Transverse colon (tissue), 4 donors: ENCODE measurements at regions of chr12 and their contacts with region 1.

Region 1: GRCh38 chr12:39541471-39541870 is 78.1 kb downstream of the ABCD2 start:
- DNase-seq: no peak
- H3K4me3 ChIP-seq: no peak overlapping the region
- H3K27ac ChIP-seq: no peak overlapping the region
- H3K4me1 ChIP-seq: no peaks in the 10 kb centered on the region
- H3K27me3 ChIP-seq: no peaks in the 10 kb centered on the region
- CTCF ChIP-seq: no peak
- EP300 ChIP-seq: no peak
- POLR2A ChIP-seq: no peak

Region 2: GRCh38 chr12:38601949-38602348 is 939.5 kb before region 1 on chr12:
- in situ Hi-C with region 1: no loop called
- intact Hi-C with region 1: loop called (anchors 10 kb)
- DNase-seq: no peak
- H3K4me3 ChIP-seq: no peak overlapping the region
- H3K27ac ChIP-seq: no peak overlapping the region
- H3K4me1 ChIP-seq: no peaks in the 10 kb centered on the region
- H3K27me3 ChIP-seq: no peaks in the 10 kb centered on the region
- CTCF ChIP-seq: no peak
- EP300 ChIP-seq: no peak
- POLR2A ChIP-seq: no peak

Region 3: GRCh38 chr12:39824505-39825212 is 283.2 kb after region 1 on chr12:
- in situ Hi-C with region 1: no loop called
- intact Hi-C with region 1: no loop called
- DNase-seq: no peak
- H3K4me3 ChIP-seq: no peak overlapping the region
- H3K27ac ChIP-seq: no peak overlapping the region
- H3K4me1 ChIP-seq: no peaks in the 10 kb centered on the region
- H3K27me3 ChIP-seq: no peaks in the 10 kb centered on the region
- CTCF ChIP-seq: no peak
- EP300 ChIP-seq: no peak
- POLR2A ChIP-seq: no peak